ENCODE measurements at regions of chr1 and their contacts with region 1.

Region 1: GRCh38 chr1:40040511-40041465 is at the start of gene CAP1:
- DNase-seq: peak; percentile 100
- ATAC-seq: peak; percentile 86
- H3K4me3 ChIP-seq: peak within 1 kb of the TSS; percentile 88 to 100 (median 97)
- H3K4me3 Mint-ChIP-seq: peak within 1 kb of the TSS; percentile 99
- H3K27ac ChIP-seq: peak within 1 kb of the TSS; percentile 91 to 98
- H3K27ac Mint-ChIP-seq: peak within 1 kb of the TSS; percentile 100
- H3K4me1 ChIP-seq: peaks cover 70 to 83% of the 10 kb centered on the region in 2 donors
- H3K4me1 Mint-ChIP-seq: peaks cover 71% of the 10 kb centered on the region
- H3K27me3 ChIP-seq: no peaks in the 10 kb centered on the region
- H3K27me3 Mint-ChIP-seq: no peaks in the 10 kb centered on the region
- CTCF ChIP-seq: no peak
- total RNA-seq, gene CAP1: 195 and 203 TPM in 2 replicates

Region 2: GRCh38 chr1:39738622-39739366 is 302.0 kb before region 1 on chr1 and contains the start of gene PPIE:
- CTCF ChIA-PET with region 1: no interaction called
- POLR2A ChIA-PET with region 1: no interaction called
- intact Hi-C with region 1: loop called (anchors 2 kb)
- DNase-seq: peak; percentile 91
- ATAC-seq: peak; percentile 99
- H3K4me3 ChIP-seq: peak within 1 kb of the TSS; percentile 64 to 92 (median 81)
- H3K4me3 Mint-ChIP-seq: peak within 1 kb of the TSS; percentile 98
- H3K27ac ChIP-seq: peak within 1 kb of the TSS; percentile 58 to 78
- H3K27ac Mint-ChIP-seq: peak within 1 kb of the TSS; percentile 91
- H3K4me1 ChIP-seq: peaks cover 9 to 16% of the 10 kb centered on the region in 2 donors
- H3K4me1 Mint-ChIP-seq: peaks cover 19% of the 10 kb centered on the region
- H3K27me3 ChIP-seq: peaks cover 0 to 18% (median 14%) of the 10 kb centered on the region in 4 experiments
- H3K27me3 Mint-ChIP-seq: peaks cover 19% of the 10 kb centered on the region
- CTCF ChIP-seq: no peak
- total RNA-seq, gene PPIE: 68.6 and 69.4 TPM in 2 replicates

Region 3: GRCh38 chr1:39886757-39887231 is 154.0 kb before region 1 on chr1:
- CTCF ChIA-PET with region 1: no interaction called
- POLR2A ChIA-PET with region 1: no interaction called
- intact Hi-C with region 1: loop called (anchors 1 kb)
- DNase-seq: no peak
- ATAC-seq: no peak
- H3K4me3 ChIP-seq: no peak overlapping the region
- H3K4me3 Mint-ChIP-seq: no peak overlapping the region
- H3K27ac ChIP-seq: no peak overlapping the region
- H3K27ac Mint-ChIP-seq: no peak overlapping the region
- H3K4me1 ChIP-seq: peaks cover 10 to 11% of the 10 kb centered on the region in 2 donors
- H3K4me1 Mint-ChIP-seq: peaks cover 16% of the 10 kb centered on the region
- H3K27me3 ChIP-seq: no peaks in the 10 kb centered on the region
- H3K27me3 Mint-ChIP-seq: peaks cover 6% of the 10 kb centered on the region
- CTCF ChIP-seq: no peak

Region 4: DNA sequence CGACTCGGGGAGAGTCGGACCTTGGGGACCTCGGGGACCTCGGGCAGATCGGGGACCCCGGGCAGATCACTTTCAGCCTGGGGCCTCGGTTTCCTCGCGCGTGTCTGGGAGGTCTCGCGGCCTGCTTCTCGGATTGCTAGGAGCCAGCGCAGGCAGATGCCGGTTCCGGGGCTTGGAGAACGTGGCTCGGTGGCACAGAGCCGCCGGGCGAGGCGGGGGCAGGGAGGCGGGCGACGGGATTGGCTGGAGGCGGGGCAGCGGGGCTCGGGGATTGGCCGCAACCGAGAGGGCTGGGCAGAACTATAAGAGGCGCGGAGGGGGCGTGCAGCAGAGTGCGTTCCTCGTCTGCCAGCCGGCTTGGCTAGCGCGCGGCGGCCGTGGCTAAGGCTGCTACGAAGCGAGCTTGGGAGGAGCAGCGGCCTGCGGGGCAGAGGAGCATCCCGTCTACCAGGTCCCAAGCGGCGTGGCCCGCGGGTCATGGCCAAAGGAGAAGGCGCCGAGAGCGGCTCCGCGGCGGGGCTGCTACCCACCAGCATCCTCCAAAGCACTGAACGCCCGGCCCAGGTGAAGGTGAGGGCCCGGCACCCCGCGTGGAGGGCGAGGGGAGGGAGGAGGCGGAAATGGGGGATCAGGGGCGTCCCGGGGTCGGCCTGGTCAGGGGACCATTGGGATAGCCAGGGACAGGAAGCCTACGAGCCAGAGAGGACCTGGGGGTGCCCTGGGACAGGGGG is 85.8 kb before region 1 on chr1 and contains the start of gene MFSD2A:
- CTCF ChIA-PET with region 1: interaction called, 4 read pairs
- POLR2A ChIA-PET with region 1: interaction called, 7 read pairs
- intact Hi-C with region 1: loop called (anchors 2 kb)
- DNase-seq: peak; percentile 91
- ATAC-seq: peak; percentile 98
- H3K4me3 ChIP-seq: peak within 1 kb of the TSS; percentile 45 to 94 (median 67)
- H3K4me3 Mint-ChIP-seq: peak within 1 kb of the TSS; percentile 90
- H3K27ac ChIP-seq: peak within 1 kb of the TSS; percentile 27 to 48
- H3K27ac Mint-ChIP-seq: peak within 1 kb of the TSS; percentile 84
- H3K4me1 ChIP-seq: peaks cover 15 to 30% of the 10 kb centered on the region in 2 donors
- H3K4me1 Mint-ChIP-seq: peaks cover 37% of the 10 kb centered on the region
- H3K27me3 ChIP-seq: no peaks in the 10 kb centered on the region
- H3K27me3 Mint-ChIP-seq: peaks cover under 1% of the 10 kb centered on the region
- CTCF ChIP-seq: no peak
- total RNA-seq, gene MFSD2A: 3.9 TPM in 2 replicates

Region 5: GRCh38 chr1:40078512-40079333 is 37.9 kb after region 1 on chr1:
- CTCF ChIA-PET with region 1: interaction called, 11 read pairs
- POLR2A ChIA-PET with region 1: no interaction called
- intact Hi-C with region 1: no loop called
- DNase-seq: peak; percentile 74
- ATAC-seq: peak; percentile 87
- H3K4me3 ChIP-seq: no peak overlapping the region
- H3K4me3 Mint-ChIP-seq: no peak overlapping the region
- H3K27ac ChIP-seq: no peak overlapping the region
- H3K27ac Mint-ChIP-seq: no peak overlapping the region
- H3K4me1 ChIP-seq: peaks cover 10 to 21% of the 10 kb centered on the region in 2 donors
- H3K4me1 Mint-ChIP-seq: peaks cover 19% of the 10 kb centered on the region
- H3K27me3 ChIP-seq: no peaks in the 10 kb centered on the region
- H3K27me3 Mint-ChIP-seq: no peaks in the 10 kb centered on the region
- CTCF ChIP-seq: peak; percentile 93

Region 6: DNA sequence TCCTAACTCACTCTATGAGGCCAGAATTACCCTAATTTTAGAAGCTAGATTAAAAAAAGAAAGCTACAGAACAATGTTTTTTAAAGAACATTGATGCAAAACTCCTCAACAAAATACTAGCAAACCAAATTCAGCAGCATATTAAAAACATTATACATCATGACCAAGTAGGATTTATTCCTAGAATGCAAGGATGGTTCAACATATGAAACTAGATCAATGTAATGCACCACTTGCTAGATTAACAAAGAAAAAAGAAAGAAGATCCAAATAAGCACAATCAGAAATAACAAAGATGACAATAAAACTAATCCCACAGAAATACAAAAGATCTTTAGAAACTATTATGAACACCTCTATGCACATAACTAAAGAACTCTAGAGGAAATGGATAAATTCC is 69.6 kb after region 1 on chr1:
- CTCF ChIA-PET with region 1: no interaction called
- POLR2A ChIA-PET with region 1: no interaction called
- intact Hi-C with region 1: no loop called
- DNase-seq: no peak
- ATAC-seq: no peak
- H3K4me3 ChIP-seq: no peak overlapping the region
- H3K4me3 Mint-ChIP-seq: no peak overlapping the region
- H3K27ac ChIP-seq: no peak overlapping the region
- H3K27ac Mint-ChIP-seq: no peak overlapping the region
- H3K4me1 ChIP-seq: no peaks in the 10 kb centered on the region
- H3K4me1 Mint-ChIP-seq: no peaks in the 10 kb centered on the region
- H3K27me3 ChIP-seq: peaks cover 0 to 10% (median 2%) of the 10 kb centered on the region in 4 experiments
- H3K27me3 Mint-ChIP-seq: peaks cover 30% of the 10 kb centered on the region
- CTCF ChIP-seq: no peak

Region 7: DNA sequence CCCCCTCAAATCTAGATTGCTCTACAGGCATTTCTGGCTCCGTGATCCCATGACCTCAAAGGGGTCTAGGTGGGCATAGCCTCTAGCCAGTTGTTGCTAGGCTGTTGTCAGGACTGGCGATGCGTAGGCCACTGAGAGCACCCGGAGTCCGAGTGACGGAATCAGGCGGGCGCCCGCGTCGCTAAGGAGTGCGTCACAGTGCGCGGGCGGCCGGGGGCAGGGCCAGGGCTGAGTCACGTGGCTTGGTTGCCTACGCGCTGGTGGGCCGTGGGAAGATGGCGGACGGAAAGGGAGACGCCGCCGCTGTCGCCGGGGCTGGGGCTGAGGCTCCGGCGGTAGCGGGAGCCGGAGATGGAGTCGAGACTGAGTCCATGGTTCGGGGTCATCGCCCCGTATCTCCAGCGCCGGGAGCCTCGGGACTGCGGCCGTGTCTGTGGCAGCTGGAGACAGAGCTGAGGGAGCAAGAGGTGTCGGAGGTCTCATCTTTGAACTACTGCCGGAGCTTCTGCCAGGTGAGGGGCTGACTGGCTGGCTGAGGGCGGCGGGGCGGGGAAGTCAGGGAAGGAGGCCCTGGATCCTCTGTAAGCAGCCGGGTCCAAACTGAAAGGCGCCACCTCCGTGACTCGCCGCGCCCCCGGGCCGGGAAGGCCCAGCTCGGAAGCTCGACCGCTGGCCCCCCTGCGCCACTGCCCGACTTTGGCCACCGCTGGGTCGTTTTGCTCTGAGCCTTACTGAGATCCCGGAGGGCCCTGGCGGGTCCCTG is 120.5 kb after region 1 on chr1 and contains the start of gene RLF:
- CTCF ChIA-PET with region 1: no interaction called
- POLR2A ChIA-PET with region 1: no interaction called
- intact Hi-C with region 1: loop called (anchors 1 kb)
- DNase-seq: peak; percentile 96
- ATAC-seq: peak; percentile 97
- H3K4me3 ChIP-seq: peak within 1 kb of the TSS; percentile 93 to 97 (median 95)
- H3K4me3 Mint-ChIP-seq: peak within 1 kb of the TSS; percentile 38
- H3K27ac ChIP-seq: peak within 1 kb of the TSS; percentile 96 to 97
- H3K27ac Mint-ChIP-seq: no peak within 1 kb of the TSS
- H3K4me1 ChIP-seq: peaks cover 28 to 39% of the 10 kb centered on the region in 2 donors
- H3K4me1 Mint-ChIP-seq: peaks cover 22% of the 10 kb centered on the region
- H3K27me3 ChIP-seq: no peaks in the 10 kb centered on the region
- H3K27me3 Mint-ChIP-seq: no peaks in the 10 kb centered on the region
- CTCF ChIP-seq: no peak
- total RNA-seq, gene RLF: 21.4 and 21.9 TPM in 2 replicates

Region 8: GRCh38 chr1:40185951-40186864 is 145.4 kb after region 1 on chr1:
- CTCF ChIA-PET with region 1: no interaction called
- POLR2A ChIA-PET with region 1: no interaction called
- intact Hi-C with region 1: no loop called
- DNase-seq: peak; percentile 62
- ATAC-seq: peak; percentile 94
- H3K4me3 ChIP-seq: no peak overlapping the region
- H3K4me3 Mint-ChIP-seq: peak overlapping the region; percentile 60
- H3K27ac ChIP-seq: no peak overlapping the region
- H3K27ac Mint-ChIP-seq: no peak overlapping the region
- H3K4me1 ChIP-seq: peaks cover 18 to 20% of the 10 kb centered on the region in 2 donors
- H3K4me1 Mint-ChIP-seq: peaks cover 48% of the 10 kb centered on the region
- H3K27me3 ChIP-seq: no peaks in the 10 kb centered on the region
- H3K27me3 Mint-ChIP-seq: no peaks in the 10 kb centered on the region
- CTCF ChIP-seq: no peak

Region 9: GRCh38 chr1:40709100-40709801 is 668.5 kb after region 1 on chr1:
- CTCF ChIA-PET with region 1: no interaction called
- POLR2A ChIA-PET with region 1: no interaction called
- intact Hi-C with region 1: loop called (anchors 5 kb)
- DNase-seq: peak; percentile 92
- ATAC-seq: peak; percentile 90
- H3K4me3 ChIP-seq: peak overlapping the region; percentile 55 to 88 (median 76)
- H3K4me3 Mint-ChIP-seq: peak overlapping the region; percentile 96
- H3K27ac ChIP-seq: peak overlapping the region; percentile 87 to 94
- H3K27ac Mint-ChIP-seq: peak overlapping the region; percentile 96
- H3K4me1 ChIP-seq: peaks cover 58 to 64% of the 10 kb centered on the region in 2 donors
- H3K4me1 Mint-ChIP-seq: peaks cover 74% of the 10 kb centered on the region
- H3K27me3 ChIP-seq: no peaks in the 10 kb centered on the region
- H3K27me3 Mint-ChIP-seq: no peaks in the 10 kb centered on the region
- CTCF ChIP-seq: no peak

Measured in B cell (primary cell).